Cardiac septum (tissue), 1 donor: ENCODE measurements at regions of chr7 and their contacts with region 1.

Region 1: GRCh38 chr7:92447345-92448204 is at the start of gene GATAD1:
- DNase-seq: peak; percentile 96
- total RNA-seq, gene GATAD1: 16.7 TPM

Region 2: GRCh38 chr7:91880413-91881241 is 566.9 kb before region 1 on chr7 and contains the start of gene MTERF1:
- intact Hi-C with region 1: loop called (anchors 5 kb)
- DNase-seq: peak; percentile 95
- total RNA-seq, gene MTERF1: 7.5 TPM

Region 3: DNA sequence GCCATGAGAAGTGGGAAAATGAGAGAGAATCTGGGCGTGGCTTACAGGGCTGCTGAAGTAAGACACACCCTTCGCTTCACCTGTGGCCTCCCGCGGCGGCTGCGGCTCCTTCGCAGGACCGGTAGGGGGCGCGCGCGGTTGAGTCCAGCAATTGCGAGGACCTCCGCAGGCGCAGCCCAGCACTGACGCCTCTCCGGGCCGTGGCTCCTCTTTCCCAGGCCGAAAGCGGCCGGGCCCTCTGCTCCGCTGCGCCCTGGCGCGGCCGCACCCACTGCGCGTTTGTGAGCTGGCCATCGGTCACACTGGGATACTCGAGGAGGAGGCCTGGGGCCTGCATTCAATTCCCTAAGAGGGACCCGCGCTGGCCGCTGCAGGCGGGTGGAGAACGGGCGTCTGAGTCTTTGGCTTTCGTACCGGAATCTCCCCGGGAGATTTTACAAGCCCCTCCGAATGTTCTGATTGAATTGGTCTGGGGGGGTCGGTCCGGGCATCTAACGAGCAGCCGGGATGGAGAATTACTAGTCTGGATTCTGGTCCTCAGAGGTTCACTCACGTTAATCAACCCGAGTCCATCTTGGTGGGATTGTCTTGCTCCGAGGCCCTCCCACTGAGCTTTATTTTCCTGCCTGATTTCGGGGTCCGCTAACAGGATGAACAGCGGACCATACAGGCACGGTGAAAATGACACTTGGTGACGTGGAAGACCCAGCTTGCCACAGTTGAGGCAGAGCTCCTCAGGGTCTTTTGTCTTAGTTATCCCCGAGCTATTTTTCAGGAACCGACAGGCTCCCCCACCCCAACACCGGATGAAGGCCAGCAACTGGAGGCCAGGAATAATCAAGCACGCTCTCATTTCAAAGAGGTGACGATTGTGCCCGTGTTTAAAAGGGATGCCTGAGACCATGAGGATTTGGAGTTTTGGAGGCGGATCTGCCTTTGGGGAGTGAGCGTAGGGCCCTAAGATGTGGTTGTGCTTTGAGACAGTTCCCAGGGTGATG is 268.3 kb before region 1 on chr7 and contains the start of gene LRRD1:
- intact Hi-C with region 1: loop called (anchors 5 kb)
- DNase-seq: peak; percentile 92
- total RNA-seq, gene LRRD1: 0.43 TPM

Region 4: DNA sequence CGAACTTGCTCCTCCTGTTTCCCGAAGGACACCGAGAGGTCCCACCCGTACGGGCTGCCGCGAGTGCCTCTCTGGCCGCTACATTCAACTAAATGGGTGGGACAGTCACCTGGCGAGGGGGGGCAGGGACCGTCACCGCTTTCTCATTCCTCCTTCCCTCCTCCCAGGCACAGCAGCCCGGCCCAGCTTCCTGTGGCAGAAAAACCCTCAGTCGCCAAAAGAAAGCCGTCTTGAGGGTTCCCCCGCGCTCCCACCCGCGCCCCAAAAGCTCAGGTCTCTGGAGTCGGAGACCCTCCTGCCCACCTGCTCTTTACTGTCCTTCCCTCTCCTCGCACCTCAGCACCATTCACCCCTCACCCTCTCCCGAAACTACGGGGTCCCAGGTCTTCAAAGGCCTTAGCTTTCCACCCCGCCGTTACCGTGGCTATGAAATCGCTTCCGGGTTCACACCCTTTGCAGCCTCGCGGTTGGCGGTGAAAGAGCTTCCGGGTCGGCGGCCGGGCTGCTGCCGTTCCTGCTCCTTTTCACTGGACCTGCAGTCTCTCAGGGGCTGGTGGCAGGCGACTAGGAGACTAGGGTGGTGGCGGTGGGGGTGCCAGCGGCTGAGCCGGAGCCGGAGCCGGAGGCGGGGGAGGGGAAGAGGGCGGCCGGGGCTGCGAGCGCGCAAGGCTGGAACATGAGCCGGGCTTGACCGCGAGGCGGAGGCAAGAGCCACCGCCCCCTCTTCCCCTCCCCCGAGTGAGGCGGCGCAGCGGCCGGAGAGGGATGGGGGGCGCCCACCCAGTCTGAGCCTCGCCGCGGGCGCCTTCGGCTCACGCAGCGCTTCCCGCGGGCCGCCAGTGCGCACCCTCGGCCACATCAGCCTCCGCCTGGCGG is 201.8 kb before region 1 on chr7 and contains the starts of genes ANKIB1 and KRIT1:
- intact Hi-C with region 1: loop called (anchors 5 kb)
- DNase-seq: peak; percentile 95
- total RNA-seq, gene ANKIB1: 59.4 TPM
- total RNA-seq, gene KRIT1: 29.3 TPM

Region 5: GRCh38 chr7:92425321-92425947 is 22.1 kb before region 1 on chr7:
- intact Hi-C with region 1: loop called (anchors 1 kb)
- DNase-seq: no peak

Region 6: GRCh38 chr7:93218997-93219827 is 771.6 kb after region 1 on chr7:
- intact Hi-C with region 1: no loop called
- DNase-seq: no peak